WTC11 (cell line): ENCODE measurements at regions of chr13 and their contacts with region 1.

Region 1: DNA sequence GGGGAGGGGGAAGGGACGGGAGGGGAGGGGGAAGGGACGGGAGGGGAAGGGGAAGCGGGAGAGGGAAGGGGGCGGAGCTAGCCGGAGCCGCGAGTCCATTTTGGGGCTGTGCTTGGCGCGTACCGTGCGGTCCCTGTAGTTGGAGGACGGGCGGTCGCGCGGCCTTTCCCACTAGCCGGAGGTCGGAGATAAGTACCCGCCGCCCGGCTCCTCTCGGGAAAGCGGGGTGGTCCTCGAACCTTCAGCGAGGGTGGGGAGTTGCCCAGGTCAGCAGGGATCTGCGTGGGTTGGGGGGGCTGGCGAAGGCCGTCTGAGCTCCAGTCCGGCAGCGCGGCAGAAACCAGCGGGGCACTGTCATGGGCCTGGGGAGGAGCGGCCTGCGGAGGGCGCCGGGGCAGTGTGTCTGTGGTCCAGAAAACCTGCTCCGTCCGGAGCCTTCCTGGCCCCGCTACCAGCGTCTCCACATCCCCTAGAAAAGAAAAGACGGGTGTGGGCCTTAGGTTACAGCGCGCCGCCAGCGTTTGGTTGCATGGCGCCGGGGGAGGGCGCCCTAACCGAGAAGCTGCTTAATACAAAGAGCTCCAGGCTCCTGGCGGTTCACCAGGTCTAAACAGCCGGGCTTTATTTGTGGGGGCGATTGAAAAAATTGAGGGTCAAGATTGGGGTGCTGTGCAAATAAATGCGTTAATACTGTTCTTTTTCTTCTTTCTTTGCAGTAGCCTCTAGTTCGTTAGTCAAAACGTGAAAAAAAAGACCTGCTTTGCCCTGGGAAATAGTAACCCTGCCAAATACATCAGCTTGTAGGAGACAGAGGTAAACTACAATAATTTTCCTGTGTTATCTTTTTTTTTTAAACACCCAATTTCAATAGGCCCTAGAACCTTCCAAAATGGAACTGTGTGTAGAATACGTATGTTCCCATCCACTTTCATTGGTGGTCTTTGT is at the start of gene TRIM13:
- DNase-seq: peak; percentile 87
- ATAC-seq: peak; percentile 67
- H3K4me3 Mint-ChIP-seq: peak within 1 kb of the TSS; percentile 85
- H3K27ac Mint-ChIP-seq: peak within 1 kb of the TSS; percentile 97
- H3K4me1 Mint-ChIP-seq: peaks cover 33% of the 10 kb centered on the region
- H3K27me3 Mint-ChIP-seq: no peaks in the 10 kb centered on the region
- CTCF ChIP-seq: peak; percentile 49; the same call in 1 of the 2 replicates
- total RNA-seq, gene TRIM13: 27.5 to 29.1 TPM (median 27.6 TPM) in 3 replicates

Region 2: GRCh38 chr13:49641801-49642291 is 355.4 kb before region 1 on chr13:
- CTCF ChIA-PET with region 1: no interaction called
- POLR2A ChIA-PET with region 1: no interaction called
- DNase-seq: no peak
- ATAC-seq: no peak
- H3K4me3 Mint-ChIP-seq: no peak overlapping the region
- H3K27ac Mint-ChIP-seq: no peak overlapping the region
- H3K4me1 Mint-ChIP-seq: peaks cover 15% of the 10 kb centered on the region
- H3K27me3 Mint-ChIP-seq: no peaks in the 10 kb centered on the region
- CTCF ChIP-seq: no peak

Region 3: GRCh38 chr13:49936085-49936940 is 60.9 kb before region 1 on chr13 and contains the start of gene SPRYD7:
- CTCF ChIA-PET with region 1: interaction called, 29 read pairs
- POLR2A ChIA-PET with region 1: interaction called, 5 read pairs
- DNase-seq: peak; percentile 99
- ATAC-seq: peak; percentile 99
- H3K4me3 Mint-ChIP-seq: peak within 1 kb of the TSS; percentile 88
- H3K27ac Mint-ChIP-seq: peak within 1 kb of the TSS; percentile 76; the same call in 1 of the 2 replicates
- H3K4me1 Mint-ChIP-seq: peaks cover 6% of the 10 kb centered on the region
- H3K27me3 Mint-ChIP-seq: peaks cover 12% of the 10 kb centered on the region
- CTCF ChIP-seq: peak; percentile 95
- total RNA-seq, gene SPRYD7: 3.0 to 3.8 TPM (median 3.1 TPM) in 3 replicates

Region 4: DNA sequence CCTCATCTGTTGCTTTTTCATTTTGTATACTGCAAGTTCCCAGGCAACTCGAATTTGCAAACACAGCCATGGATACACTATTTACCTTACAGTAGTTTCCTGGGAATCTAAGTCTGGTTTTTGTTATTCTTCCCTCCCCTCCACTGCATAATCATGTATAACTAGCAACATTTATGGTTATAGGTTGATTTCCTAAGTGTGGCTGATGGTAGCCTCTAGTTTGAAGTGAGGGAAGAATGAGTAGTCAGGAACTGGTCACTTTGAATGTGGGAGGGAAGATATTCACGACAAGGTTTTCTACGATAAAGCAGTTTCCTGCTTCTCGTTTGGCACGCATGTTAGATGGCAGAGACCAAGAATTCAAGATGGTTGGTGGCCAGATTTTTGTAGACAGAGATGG is 18.0 kb after region 1 on chr13 and contains the start of gene KCNRG:
- CTCF ChIA-PET with region 1: interaction called, 13 read pairs
- POLR2A ChIA-PET with region 1: interaction called, 7 read pairs
- DNase-seq: no peak
- ATAC-seq: peak; percentile 68
- H3K4me3 Mint-ChIP-seq: peak within 1 kb of the TSS; percentile 31
- H3K27ac Mint-ChIP-seq: peak within 1 kb of the TSS; percentile 90
- H3K4me1 Mint-ChIP-seq: peaks cover 41% of the 10 kb centered on the region
- H3K27me3 Mint-ChIP-seq: no peaks in the 10 kb centered on the region
- CTCF ChIP-seq: no peak
- total RNA-seq, gene KCNRG: 0.21 to 1.1 TPM (median 0.32 TPM) in 3 replicates

Region 5: GRCh38 chr13:50123862-50124536 is 126.8 kb after region 1 on chr13:
- CTCF ChIA-PET with region 1: interaction called, 49 read pairs
- POLR2A ChIA-PET with region 1: interaction called, 32 read pairs
- DNase-seq: peak; percentile 87
- ATAC-seq: peak; percentile 33
- H3K4me3 Mint-ChIP-seq: peak overlapping the region; percentile 78
- H3K27ac Mint-ChIP-seq: no peak overlapping the region
- H3K4me1 Mint-ChIP-seq: peaks cover 52% of the 10 kb centered on the region
- H3K27me3 Mint-ChIP-seq: peaks cover 80% of the 10 kb centered on the region
- CTCF ChIP-seq: no peak

Region 6: DNA sequence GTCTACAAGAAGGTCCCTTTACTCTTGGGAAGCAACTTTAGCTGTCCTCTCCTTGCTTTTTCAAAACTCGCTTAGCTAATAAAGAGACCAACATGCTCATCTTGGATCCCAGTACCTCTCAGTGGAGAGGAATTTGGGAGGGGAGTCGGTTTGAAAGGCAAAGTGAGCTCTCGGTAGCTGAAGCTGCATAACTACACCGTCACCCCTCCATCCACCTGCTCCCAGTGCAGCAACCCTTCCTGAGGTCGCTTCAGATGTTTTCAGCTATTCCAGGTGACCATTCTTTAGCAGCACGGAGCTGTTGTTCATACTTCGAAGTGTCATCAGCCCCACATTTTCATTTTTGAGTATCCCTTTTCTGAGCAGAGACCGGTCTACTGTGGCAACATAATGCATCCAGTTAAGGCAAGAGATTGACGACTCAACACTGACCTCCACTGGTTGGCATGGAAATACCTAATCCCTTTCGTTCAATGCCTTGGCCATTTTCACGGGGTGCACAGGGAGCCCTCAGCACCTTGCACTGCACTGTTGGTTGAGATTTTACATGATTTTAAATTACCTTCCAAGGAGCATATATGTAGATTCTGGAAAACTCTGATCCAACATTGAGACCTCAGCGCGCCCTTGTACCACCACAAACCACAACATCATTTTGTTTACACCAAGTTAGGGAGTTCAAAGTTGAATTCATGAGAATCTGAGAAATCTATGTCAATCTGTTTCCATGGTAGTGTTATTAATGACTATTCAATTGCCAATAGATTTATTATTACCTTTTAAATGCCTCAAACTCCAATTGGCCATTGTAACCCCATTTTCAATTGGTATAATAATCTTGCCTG is 804.1 kb after region 1 on chr13:
- CTCF ChIA-PET with region 1: interaction called, 11 read pairs
- POLR2A ChIA-PET with region 1: no interaction called
- DNase-seq: peak; percentile 65
- ATAC-seq: peak; percentile 98
- H3K4me3 Mint-ChIP-seq: peak overlapping the region; percentile 58
- H3K27ac Mint-ChIP-seq: no peak overlapping the region
- H3K4me1 Mint-ChIP-seq: peaks cover 14% of the 10 kb centered on the region
- H3K27me3 Mint-ChIP-seq: no peaks in the 10 kb centered on the region
- CTCF ChIP-seq: peak; percentile 47